GM12878 (cell line): ENCODE measurements at regions of chr1 and their contacts with region 1.

Region 1: DNA sequence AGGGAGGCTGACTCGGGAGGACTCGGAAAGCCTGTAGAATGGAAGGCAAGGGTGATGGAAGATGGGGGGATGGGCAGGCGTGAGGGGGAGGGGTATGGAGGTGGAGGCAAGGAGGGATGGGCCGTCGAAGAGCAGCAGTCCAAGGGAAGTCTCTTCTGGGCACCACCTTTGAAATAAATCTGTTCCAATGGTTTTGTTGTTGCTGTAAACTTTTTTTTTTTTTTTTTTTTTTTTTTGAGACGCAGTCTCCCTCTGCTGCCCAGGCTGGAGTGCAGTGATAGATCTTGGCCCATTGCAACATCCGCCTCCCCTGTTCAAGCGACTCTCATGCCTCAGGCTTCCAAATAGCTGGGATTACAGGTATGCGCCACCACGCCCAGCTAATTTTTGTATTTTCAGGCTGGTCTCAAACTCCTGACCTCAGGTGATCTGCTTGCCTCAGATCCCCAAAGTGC is 79.0 kb upstream of the SLC45A1 start:
- DNase-seq: no peak
- ATAC-seq: no peak
- H3K4me3 ChIP-seq: no peak overlapping the region
- H3K27ac ChIP-seq: no peak overlapping the region
- H3K4me1 ChIP-seq: no peaks in the 10 kb centered on the region
- H3K27me3 ChIP-seq: no peaks in the 10 kb centered on the region; a peak in 1 of 4 replicates
- CTCF ChIP-seq: peak in 1 of 3 experiments; percentile 20; a peak in 2 of 6 replicates
- EP300 ChIP-seq: no peak
- POLR2A ChIP-seq: no peak
- RAD21 ChIP-seq: peak; percentile 7; the same call in 1 of the 2 replicates

Region 2: DNA sequence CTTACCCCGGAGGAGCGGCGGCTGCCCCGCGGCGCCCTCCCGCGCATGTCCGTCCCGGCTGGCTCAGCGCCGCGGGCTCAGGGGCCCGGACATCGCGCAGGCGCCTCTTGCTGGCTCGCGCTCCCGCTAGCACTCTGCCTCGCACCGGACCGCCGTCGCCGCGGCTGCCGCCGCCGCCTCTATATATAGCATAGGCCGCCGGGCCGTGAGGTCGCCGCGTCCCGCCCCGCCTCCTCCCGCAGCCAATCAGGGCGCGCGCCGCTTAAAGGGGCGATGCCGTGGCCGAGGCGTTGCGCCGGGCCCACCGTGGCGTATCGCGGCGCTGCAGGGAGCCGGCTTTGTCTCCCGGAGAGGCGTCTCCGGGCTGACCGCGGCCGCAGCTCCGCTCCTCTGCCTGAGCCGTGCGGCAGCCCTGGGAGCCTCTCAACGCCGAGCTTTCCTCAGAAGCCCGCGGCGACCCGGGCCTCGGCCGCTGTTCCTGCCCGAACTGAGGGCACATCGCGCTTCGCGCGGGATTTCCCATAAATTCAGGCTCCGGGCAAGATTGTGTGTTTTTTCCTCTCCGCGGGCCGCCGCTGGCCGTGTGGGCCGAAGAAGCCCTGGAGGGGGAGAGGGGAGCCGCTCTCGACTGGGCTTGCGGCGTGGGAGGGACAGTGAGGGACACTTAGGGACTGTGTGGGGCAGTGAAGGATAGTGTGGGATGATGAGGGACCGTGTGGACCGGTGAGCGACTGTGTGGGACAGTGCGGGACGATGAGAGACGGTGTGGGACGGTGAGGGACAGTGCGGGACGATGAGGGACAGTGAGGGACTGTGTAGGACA is 212.5 kb before region 1 on chr1 and contains the start of gene ERRFI1:
- CTCF ChIA-PET with region 1: interaction called, 3 read pairs
- POLR2A ChIA-PET with region 1: no interaction called
- RAD21 ChIA-PET with region 1: no interaction called
- SMC1A ChIA-PET with region 1: interaction called, 3 read pairs
- in situ Hi-C with region 1: no loop called
- intact Hi-C with region 1: loop called (anchors 1 kb)
- DNase-seq: peak; percentile 28
- ATAC-seq: peak; percentile 97
- H3K4me3 ChIP-seq: peak within 1 kb of the TSS; percentile 75
- H3K27ac ChIP-seq: no peak within 1 kb of the TSS
- H3K4me1 ChIP-seq: peaks cover 5% of the 10 kb centered on the region
- H3K27me3 ChIP-seq: peaks cover 0 to 4% of the 10 kb centered on the region in 2 experiments; a peak in 1 of 4 replicates
- CTCF ChIP-seq: no peak
- EP300 ChIP-seq: no peak
- POLR2A ChIP-seq: peak; percentile 93
- RAD21 ChIP-seq: no peak
- polyA plus RNA-seq, gene ERRFI1: 1.6 to 2.4 TPM

Region 3: GRCh38 chr1:8055973-8056372 is 182.9 kb before region 1 on chr1:
- CTCF ChIA-PET with region 1: no interaction called
- POLR2A ChIA-PET with region 1: no interaction called
- RAD21 ChIA-PET with region 1: no interaction called
- SMC1A ChIA-PET with region 1: no interaction called
- in situ Hi-C with region 1: no loop called
- intact Hi-C with region 1: no loop called
- DNase-seq: no peak
- ATAC-seq: no peak
- H3K4me3 ChIP-seq: no peak overlapping the region
- H3K27ac ChIP-seq: no peak overlapping the region
- H3K4me1 ChIP-seq: no peaks in the 10 kb centered on the region
- H3K27me3 ChIP-seq: no peaks in the 10 kb centered on the region
- CTCF ChIP-seq: no peak
- EP300 ChIP-seq: no peak
- POLR2A ChIP-seq: no peak
- RAD21 ChIP-seq: no peak

Region 4: GRCh38 chr1:10057343-10057742 is 1818.5 kb after region 1 on chr1:
- CTCF ChIA-PET with region 1: no interaction called
- POLR2A ChIA-PET with region 1: no interaction called
- RAD21 ChIA-PET with region 1: no interaction called
- SMC1A ChIA-PET with region 1: no interaction called
- in situ Hi-C with region 1: no loop called
- intact Hi-C with region 1: no loop called
- DNase-seq: no peak
- ATAC-seq: no peak
- H3K4me3 ChIP-seq: no peak overlapping the region
- H3K27ac ChIP-seq: no peak overlapping the region
- H3K4me1 ChIP-seq: no peaks in the 10 kb centered on the region; the same call in 1 of the 2 replicates
- H3K27me3 ChIP-seq: no peaks in the 10 kb centered on the region
- CTCF ChIP-seq: no peak
- EP300 ChIP-seq: no peak
- POLR2A ChIP-seq: no peak
- RAD21 ChIP-seq: no peak